ENCODE measurements at regions of chr14 and their contacts with region 1.

Region 1: GRCh38 chr14:90758028-90758889 is 58.0 kb downstream of the TTC7B start:
- DNase-seq: peak; percentile 82 to 99 (median 94)
- ATAC-seq: peak; percentile 83
- H3K4me3 ChIP-seq: peak overlapping the region; percentile 66
- H3K4me3 Mint-ChIP-seq: peak overlapping the region; percentile 91
- H3K27ac ChIP-seq: peak overlapping the region; percentile 63 to 84
- H3K27ac Mint-ChIP-seq: peak overlapping the region; percentile 89
- H3K4me1 ChIP-seq: peaks cover 21% of the 10 kb centered on the region
- H3K4me1 Mint-ChIP-seq: peaks cover 23% of the 10 kb centered on the region
- H3K27me3 ChIP-seq: no peaks in the 10 kb centered on the region
- H3K27me3 Mint-ChIP-seq: no peaks in the 10 kb centered on the region
- CTCF ChIP-seq: peak; percentile 88

Region 2: DNA sequence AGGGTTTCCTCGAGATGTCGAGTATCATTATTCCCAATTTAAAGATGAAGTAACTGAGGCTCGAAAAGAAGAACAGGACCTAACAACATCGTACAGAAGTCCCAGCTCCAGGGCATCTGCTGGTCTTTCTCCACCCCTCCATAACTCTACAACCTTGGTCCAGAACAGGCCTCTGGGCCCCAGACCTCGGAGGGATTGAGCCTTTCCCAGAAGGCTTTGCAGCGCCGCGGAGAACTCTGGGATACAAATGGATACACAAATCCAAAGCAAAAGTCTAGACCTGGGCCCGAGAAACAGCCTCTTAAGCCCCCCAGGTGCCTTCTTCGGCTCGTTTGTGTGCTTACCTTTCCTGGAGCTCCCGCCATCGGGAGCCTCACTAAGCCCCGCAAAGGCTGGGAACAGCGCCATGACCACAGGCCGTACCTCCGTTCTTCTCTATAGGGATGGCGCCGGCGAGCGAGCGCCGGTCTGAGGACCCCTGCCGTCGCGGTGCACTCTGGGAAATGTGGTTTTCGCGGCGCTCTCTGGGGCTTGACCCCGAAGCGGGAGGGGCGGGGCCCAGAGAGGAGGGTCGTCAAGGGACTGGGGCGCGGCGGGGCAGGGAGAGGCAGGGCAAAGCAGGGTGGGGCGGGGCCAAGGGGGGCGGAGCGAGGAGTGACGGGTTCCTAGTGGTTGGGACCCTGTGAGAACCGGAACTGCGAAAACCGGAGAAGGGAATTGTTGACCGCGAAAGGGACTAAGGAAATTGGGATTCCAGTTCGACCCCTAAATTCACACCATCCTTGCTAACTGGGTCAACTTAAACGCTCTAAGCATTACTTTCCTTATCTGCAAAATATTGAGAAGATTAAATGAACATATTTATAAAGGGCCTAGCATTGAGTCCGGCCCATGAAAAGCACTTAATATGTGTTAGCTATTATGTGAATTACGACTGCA is 426.5 kb before region 1 on chr14 and contains the start of gene NRDE2:
- CTCF ChIA-PET with region 1: no interaction called
- POLR2A ChIA-PET with region 1: interaction called, 6 read pairs
- intact Hi-C with region 1: loop called in 1 of 2 experiments (anchors 5 kb)
- DNase-seq: peak; percentile 81 to 99 (median 93)
- ATAC-seq: peak; percentile 95
- H3K4me3 ChIP-seq: peak within 1 kb of the TSS; percentile 83
- H3K4me3 Mint-ChIP-seq: peak within 1 kb of the TSS; percentile 93
- H3K27ac ChIP-seq: peak within 1 kb of the TSS; percentile 60 to 72
- H3K27ac Mint-ChIP-seq: peak within 1 kb of the TSS; percentile 93
- H3K4me1 ChIP-seq: peaks cover 13% of the 10 kb centered on the region
- H3K4me1 Mint-ChIP-seq: peaks cover 40% of the 10 kb centered on the region
- H3K27me3 ChIP-seq: no peaks in the 10 kb centered on the region
- H3K27me3 Mint-ChIP-seq: peaks cover 11% of the 10 kb centered on the region
- CTCF ChIP-seq: no peak
- total RNA-seq, gene NRDE2: 17.5 to 17.9 TPM

Region 3: DNA sequence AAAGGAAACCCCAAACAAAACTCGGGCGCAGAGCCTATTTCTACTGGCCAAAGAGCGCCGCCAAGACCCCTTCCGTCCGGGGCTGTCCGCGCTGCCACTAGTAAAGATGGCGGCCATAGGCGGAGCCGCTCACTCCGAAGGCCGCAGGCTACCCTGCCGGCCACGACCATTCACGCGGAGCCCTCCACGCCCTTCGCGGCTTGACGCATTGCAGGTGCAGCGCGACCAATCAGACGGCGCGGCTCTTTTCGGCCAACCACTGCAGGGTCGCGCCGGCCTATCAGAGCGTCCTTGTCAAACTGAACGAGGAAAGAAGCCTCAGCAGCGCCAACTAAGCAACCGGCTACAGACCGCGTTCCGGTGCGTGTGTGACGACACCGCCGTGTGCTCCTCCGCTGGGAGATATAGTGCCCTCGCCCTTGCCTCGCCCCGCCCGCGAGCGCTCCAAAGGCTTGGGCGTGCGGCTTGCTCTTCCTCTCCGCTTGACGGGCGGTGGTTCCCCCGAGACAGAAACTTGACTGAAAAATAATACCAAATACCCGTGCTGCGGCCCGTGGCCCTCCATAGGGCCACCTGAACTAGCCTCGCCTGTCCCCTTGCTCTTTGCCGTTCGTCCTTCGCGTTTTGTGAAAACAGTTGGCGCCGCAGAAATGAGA is 375.1 kb before region 1 on chr14:
- CTCF ChIA-PET with region 1: interaction called, 4 read pairs
- POLR2A ChIA-PET with region 1: interaction called, 65 read pairs
- intact Hi-C with region 1: no loop called
- DNase-seq: peak; percentile 93 to 99 (median 97)
- ATAC-seq: peak; percentile 74
- H3K4me3 ChIP-seq: peak overlapping the region; percentile 83
- H3K4me3 Mint-ChIP-seq: no peak overlapping the region
- H3K27ac ChIP-seq: peak overlapping the region; percentile 95 to 98
- H3K27ac Mint-ChIP-seq: no peak overlapping the region
- H3K4me1 ChIP-seq: peaks cover 35% of the 10 kb centered on the region
- H3K4me1 Mint-ChIP-seq: peaks cover 23% of the 10 kb centered on the region
- H3K27me3 ChIP-seq: no peaks in the 10 kb centered on the region
- H3K27me3 Mint-ChIP-seq: no peaks in the 10 kb centered on the region
- CTCF ChIP-seq: no peak

Region 4: DNA sequence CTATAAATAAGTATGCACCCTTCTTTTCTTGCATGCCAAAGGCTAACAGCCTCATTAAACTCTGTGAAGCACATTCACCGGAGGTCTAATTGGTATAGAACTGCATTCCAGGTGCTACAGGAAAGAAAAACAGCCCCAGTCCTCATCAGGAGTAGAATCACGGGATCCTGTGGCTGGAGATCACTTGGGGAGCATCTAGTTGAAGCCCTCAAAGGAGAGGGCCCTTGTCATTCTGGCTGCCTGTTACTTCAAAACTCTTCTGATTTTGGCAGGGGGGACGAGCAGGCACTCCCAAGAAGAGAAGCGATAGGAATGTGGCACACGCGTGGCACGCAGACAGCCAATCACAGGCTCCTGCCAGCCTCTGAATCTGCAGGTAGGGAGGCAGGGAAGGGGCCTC is 96.4 kb before region 1 on chr14:
- CTCF ChIA-PET with region 1: no interaction called
- POLR2A ChIA-PET with region 1: no interaction called
- intact Hi-C with region 1: no loop called
- DNase-seq: no peak
- ATAC-seq: no peak
- H3K4me3 ChIP-seq: no peak overlapping the region
- H3K4me3 Mint-ChIP-seq: no peak overlapping the region
- H3K27ac ChIP-seq: no peak overlapping the region
- H3K27ac Mint-ChIP-seq: no peak overlapping the region
- H3K4me1 ChIP-seq: no peaks in the 10 kb centered on the region
- H3K4me1 Mint-ChIP-seq: peaks cover 5% of the 10 kb centered on the region
- H3K27me3 ChIP-seq: no peaks in the 10 kb centered on the region
- H3K27me3 Mint-ChIP-seq: no peaks in the 10 kb centered on the region
- CTCF ChIP-seq: no peak

Region 5: DNA sequence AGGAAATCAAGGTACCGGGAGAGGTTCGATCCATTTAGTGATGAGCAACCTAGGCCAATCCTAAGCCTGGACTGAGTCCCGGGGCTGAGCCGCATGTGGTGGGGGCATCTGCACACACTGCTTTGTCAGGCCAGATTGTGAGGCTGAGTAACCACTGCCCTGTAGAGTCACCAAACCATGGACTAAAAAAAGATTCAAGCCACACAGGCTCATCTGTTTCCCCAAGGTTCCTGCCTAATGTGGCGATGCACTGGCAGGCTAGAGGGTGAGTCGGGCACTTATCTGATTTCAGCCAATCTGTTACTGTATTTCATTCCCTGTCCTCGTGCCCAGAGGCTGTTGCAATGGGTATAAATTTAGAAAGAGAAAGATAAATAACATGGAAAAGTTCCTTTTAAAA is 82.9 kb before region 1 on chr14:
- CTCF ChIA-PET with region 1: no interaction called
- POLR2A ChIA-PET with region 1: no interaction called
- intact Hi-C with region 1: no loop called
- DNase-seq: no peak
- ATAC-seq: no peak
- H3K4me3 ChIP-seq: no peak overlapping the region
- H3K4me3 Mint-ChIP-seq: no peak overlapping the region
- H3K27ac ChIP-seq: no peak overlapping the region
- H3K27ac Mint-ChIP-seq: no peak overlapping the region
- H3K4me1 ChIP-seq: peaks cover 13% of the 10 kb centered on the region
- H3K4me1 Mint-ChIP-seq: peaks cover 14% of the 10 kb centered on the region
- H3K27me3 ChIP-seq: no peaks in the 10 kb centered on the region
- H3K27me3 Mint-ChIP-seq: no peaks in the 10 kb centered on the region
- CTCF ChIP-seq: no peak

Region 6: GRCh38 chr14:90827916-90828610 is 69.8 kb after region 1 on chr14:
- CTCF ChIA-PET with region 1: interaction called, 3 read pairs
- POLR2A ChIA-PET with region 1: no interaction called
- intact Hi-C with region 1: loop called (anchors 5 kb)
- DNase-seq: peak; percentile 76 to 95 (median 84)
- ATAC-seq: peak; percentile 99
- H3K4me3 ChIP-seq: peak overlapping the region; percentile 49
- H3K4me3 Mint-ChIP-seq: peak overlapping the region; percentile 67
- H3K27ac ChIP-seq: peak overlapping the region in 1 of 2 donors; percentile 67
- H3K27ac Mint-ChIP-seq: peak overlapping the region; percentile 64
- H3K4me1 ChIP-seq: peaks cover 17% of the 10 kb centered on the region
- H3K4me1 Mint-ChIP-seq: peaks cover 18% of the 10 kb centered on the region
- H3K27me3 ChIP-seq: no peaks in the 10 kb centered on the region
- H3K27me3 Mint-ChIP-seq: no peaks in the 10 kb centered on the region
- CTCF ChIP-seq: no peak

Region 7: DNA sequence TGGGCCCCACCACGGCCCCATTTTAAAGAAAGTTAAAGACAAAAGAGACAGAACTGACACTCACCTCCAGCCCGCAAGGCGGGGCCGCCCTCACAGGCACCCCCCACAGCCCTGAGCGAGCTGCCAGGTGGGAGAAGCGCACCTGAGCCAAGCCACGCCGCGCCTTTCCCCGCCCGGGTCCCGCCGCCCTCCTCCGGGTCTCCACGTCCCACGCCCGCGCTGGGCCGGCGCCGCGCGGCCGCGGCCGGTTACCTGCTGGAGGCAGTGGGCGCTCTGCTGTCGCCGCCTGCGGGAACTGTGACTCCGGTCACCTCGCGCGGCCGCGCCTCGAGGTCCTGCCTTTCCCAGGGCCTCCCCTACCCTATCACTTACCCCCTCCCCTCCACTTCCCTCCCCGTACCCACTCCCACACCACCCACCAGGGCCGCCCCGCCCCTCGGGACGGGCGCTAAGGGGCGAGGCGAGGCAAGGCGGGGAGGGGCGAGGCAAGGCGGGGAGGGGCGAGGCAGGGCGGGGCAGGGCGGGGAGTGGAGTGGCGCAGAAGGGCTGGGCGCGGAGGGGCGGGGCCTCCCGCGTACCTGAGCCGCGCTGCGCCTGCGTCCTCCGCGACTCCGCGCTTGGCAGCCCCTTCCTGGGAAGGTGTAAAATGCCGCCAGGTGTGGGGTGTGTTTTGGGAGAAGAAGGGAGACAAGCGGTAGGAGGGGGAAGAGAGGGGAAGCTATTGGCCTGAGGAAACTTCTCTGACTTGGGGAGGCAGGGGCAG is 1078.0 kb after region 1 on chr14:
- CTCF ChIA-PET with region 1: no interaction called
- POLR2A ChIA-PET with region 1: no interaction called
- intact Hi-C with region 1: loop called in 1 of 2 experiments (anchors 5 kb)
- DNase-seq: peak; percentile 78 to 97 (median 90)
- ATAC-seq: peak; percentile 95
- H3K4me3 ChIP-seq: peak overlapping the region; percentile 63
- H3K4me3 Mint-ChIP-seq: peak overlapping the region; percentile 93
- H3K27ac ChIP-seq: peak overlapping the region; percentile 43 to 59
- H3K27ac Mint-ChIP-seq: peak overlapping the region; percentile 90
- H3K4me1 ChIP-seq: peaks cover 33% of the 10 kb centered on the region
- H3K4me1 Mint-ChIP-seq: peaks cover 83% of the 10 kb centered on the region
- H3K27me3 ChIP-seq: no peaks in the 10 kb centered on the region
- H3K27me3 Mint-ChIP-seq: no peaks in the 10 kb centered on the region
- CTCF ChIP-seq: no peak